Heart right ventricle (tissue), 16 donors: ENCODE measurements at regions of chr1 and their contacts with region 1.

Region 1: DNA sequence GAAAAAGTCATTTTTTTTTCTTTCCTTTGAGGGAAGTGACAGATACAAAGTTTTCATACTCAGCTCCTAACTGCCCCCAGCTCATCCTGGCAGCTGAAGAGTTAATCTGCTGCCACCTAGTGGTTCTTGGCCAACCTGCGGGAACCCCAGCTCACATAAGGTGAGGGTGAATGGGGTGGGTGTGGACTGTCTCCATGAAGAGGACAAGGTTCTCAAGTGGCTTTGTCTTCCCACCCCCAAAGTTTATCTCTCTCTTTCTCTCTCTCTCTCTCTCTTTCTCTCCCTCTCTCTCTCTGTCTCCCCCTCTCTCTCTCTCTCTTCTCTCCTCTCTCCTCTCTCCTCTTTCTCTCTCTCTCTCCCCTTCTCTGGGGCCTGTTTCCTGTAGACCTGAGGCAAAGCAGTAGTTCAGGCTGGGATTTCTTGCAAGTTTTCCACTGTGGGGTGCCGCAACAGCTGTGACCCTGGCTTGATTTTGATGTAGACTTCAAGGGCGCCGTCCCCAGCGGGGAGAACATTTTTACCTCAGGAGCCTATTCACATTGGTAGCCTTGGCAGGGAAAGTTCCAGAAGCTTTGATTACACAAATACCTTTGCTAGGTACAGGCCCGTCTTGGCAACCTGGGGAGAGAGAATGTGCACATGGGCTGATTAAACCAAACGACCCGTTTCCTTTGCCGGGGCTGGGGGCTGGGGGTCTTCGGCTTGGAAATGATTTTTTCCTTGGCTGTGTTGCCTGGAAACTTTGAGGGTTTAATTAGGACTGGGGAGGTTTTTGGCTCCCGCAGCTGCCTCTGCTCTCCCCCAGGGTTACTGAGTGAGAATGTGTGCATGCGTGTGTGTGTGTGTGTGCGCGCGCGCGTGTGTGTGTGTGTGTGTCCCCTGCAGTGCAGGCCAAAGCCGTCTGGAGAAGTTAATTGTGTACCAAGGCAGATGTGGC is 135.9 kb downstream of the TM2D1 start:
- DNase-seq: peak; percentile 36 to 52
- ATAC-seq: peak; percentile 57 to 83 (median 74)
- H3K4me3 ChIP-seq: no peak overlapping the region
- H3K27ac ChIP-seq: no peak overlapping the region
- H3K4me1 ChIP-seq: no peaks in the 10 kb centered on the region
- H3K27me3 ChIP-seq: no peaks in the 10 kb centered on the region
- CTCF ChIP-seq: peak; percentile 40 to 75 (median 69)

Region 2: DNA sequence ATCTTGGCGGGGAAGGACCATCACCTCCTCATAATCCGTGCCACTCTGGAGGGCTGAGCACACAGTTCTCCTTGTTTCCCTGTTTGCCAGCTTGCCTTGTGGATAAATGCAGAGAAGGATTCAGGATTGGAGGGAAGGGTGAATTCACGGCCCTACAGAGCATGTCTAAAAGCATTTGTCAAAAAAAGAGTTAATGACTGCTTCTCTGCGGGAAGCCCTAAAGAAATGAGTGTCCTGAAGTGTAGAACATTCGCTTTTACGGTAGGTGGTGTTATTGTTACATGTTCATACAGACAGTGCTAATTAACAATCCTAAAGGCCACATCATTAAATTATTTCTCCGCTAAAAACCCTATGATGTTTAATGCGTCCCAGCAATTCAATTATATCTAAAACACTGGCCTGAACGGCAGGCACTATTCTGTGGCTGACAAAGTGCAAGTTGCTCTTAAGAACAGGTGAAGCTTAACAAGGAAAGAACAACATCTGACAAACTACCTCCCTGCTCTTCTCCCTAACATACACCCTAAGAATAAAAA is 619.0 kb before region 1 on chr1:
- intact Hi-C with region 1: loop called in 1 of 10 experiments (anchors 2 kb)
- DNase-seq: no peak
- ATAC-seq: peak; percentile 52 to 83 (median 75)
- H3K4me3 ChIP-seq: peak overlapping the region in 1 of 10 donors; percentile 10
- H3K27ac ChIP-seq: peak overlapping the region in 7 of 10 donors; percentile 41 to 76 (median 66)
- H3K4me1 ChIP-seq: peaks cover 0 to 14% (median 8%) of the 10 kb centered on the region in 9 donors
- H3K27me3 ChIP-seq: no peaks in the 10 kb centered on the region
- CTCF ChIP-seq: peak; percentile 17 to 70 (median 60)

Region 3: GRCh38 chr1:61253059-61253735 is 335.8 kb before region 1 on chr1:
- intact Hi-C with region 1: no loop called
- DNase-seq: peak; percentile 44 to 81
- ATAC-seq: peak; percentile 67 to 82 (median 77)
- H3K4me3 ChIP-seq: no peak overlapping the region
- H3K27ac ChIP-seq: peak overlapping the region in 9 of 10 donors; percentile 23 to 78 (median 70)
- H3K4me1 ChIP-seq: peaks cover 19 to 90% (median 57%) of the 10 kb centered on the region in 9 donors
- H3K27me3 ChIP-seq: no peaks in the 10 kb centered on the region
- CTCF ChIP-seq: no peak

Region 4: DNA sequence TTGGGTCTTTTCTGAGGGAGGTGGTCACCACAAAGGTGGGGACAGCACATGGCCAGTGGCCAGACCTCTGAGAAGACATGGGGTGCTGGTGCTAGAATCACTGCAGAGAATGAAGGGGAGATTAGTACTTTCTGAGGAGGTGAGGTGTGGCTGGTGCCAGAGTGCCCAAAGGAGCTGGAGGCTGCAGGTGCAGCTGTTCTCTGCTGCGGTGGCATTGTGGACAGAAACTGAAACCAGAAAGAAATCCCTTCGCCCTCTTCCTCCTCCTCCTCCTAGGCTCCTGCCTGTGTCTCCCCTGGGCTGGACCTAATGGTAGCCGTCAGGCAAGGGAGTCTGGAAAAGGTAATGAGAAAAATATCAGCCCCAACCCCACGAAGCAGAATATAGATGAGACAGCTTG is 125.8 kb before region 1 on chr1:
- intact Hi-C with region 1: loop called in 1 of 10 experiments (anchors 10 kb)
- DNase-seq: no peak
- ATAC-seq: no peak
- H3K4me3 ChIP-seq: no peak overlapping the region
- H3K27ac ChIP-seq: no peak overlapping the region
- H3K4me1 ChIP-seq: no peaks in the 10 kb centered on the region
- H3K27me3 ChIP-seq: no peaks in the 10 kb centered on the region
- CTCF ChIP-seq: no peak

Region 5: DNA sequence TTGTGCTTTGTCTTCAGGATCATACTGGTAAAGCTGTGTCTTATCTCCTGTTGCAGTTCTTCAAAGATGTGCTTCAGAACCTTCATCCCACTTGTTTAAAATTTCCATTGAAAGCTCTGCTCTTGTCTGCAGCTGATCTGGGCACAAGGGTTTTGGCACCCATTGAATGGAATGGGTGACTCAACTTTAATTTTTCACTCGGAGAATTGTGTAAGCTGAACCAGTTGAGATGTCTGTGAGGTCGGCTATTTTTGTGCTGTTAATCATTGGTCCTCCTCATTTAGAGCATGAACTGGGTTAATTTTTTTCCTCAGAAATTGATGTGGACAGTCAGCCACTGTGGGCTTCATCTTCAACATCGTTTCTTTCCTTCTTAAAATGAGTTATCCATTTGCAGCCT is 116.1 kb before region 1 on chr1:
- intact Hi-C with region 1: loop called in 3 of 10 experiments (anchors 10 kb)
- DNase-seq: no peak
- ATAC-seq: no peak
- H3K4me3 ChIP-seq: no peak overlapping the region
- H3K27ac ChIP-seq: no peak overlapping the region
- H3K4me1 ChIP-seq: no peaks in the 10 kb centered on the region
- H3K27me3 ChIP-seq: no peaks in the 10 kb centered on the region
- CTCF ChIP-seq: no peak

Region 6: DNA sequence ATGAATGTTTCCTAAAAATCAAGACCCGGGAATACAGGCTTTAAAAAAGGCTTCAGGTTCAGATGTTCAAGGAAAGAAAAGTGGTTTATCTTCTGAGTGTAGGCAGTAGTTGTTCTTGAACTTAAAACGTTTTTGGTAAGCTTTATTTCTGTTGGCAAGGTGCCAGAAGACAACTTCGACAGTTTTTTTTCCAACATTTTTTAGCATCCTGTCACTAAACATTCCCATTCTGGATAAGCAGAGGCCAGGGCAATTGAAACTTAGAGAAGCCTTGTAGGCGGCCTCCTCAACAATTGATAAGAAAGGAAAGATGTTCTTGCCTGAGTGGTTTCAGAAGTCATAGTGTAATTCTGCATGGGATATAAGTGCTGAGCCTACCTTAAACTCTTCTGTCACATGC is 220.0 kb after region 1 on chr1:
- intact Hi-C with region 1: no loop called
- DNase-seq: no peak
- ATAC-seq: no peak
- H3K4me3 ChIP-seq: no peak overlapping the region
- H3K27ac ChIP-seq: no peak overlapping the region
- H3K4me1 ChIP-seq: no peaks in the 10 kb centered on the region
- H3K27me3 ChIP-seq: no peaks in the 10 kb centered on the region
- CTCF ChIP-seq: no peak

Region 7: DNA sequence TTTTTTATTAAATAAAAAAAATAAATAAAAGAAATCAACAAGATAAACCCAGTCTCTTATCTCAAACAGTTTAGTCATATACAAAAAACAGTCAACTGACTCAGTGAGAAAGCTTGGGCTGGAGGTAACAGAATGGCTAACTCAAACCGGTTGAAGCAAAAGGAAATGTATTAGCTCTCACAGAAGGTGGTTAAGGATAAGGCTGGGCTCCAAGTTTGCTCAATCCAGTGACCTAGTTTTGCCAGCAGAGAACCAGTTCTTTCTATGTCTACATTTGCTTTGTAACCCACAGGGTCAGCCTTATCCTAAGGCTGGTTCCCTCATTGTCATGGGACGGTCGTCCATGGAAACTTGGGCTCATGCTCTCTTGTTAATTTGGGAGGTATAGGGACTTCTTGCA is 461.2 kb after region 1 on chr1:
- intact Hi-C with region 1: no loop called
- DNase-seq: no peak
- ATAC-seq: no peak
- H3K4me3 ChIP-seq: no peak overlapping the region
- H3K27ac ChIP-seq: peak overlapping the region in 1 of 10 donors; percentile 1
- H3K4me1 ChIP-seq: peaks cover 0 to 19% (median 10%) of the 10 kb centered on the region in 9 donors
- H3K27me3 ChIP-seq: no peaks in the 10 kb centered on the region
- CTCF ChIP-seq: no peak